Sciatic nerve (tissue), 2 donors: ENCODE measurements at regions of chr10 and their contacts with region 1.

Region 1: GRCh38 chr10:105188737-105189462 is 547.8 kb downstream of the SORCS3 start:
- DNase-seq: no peak
- ATAC-seq: no peak

Region 2: GRCh38 chr10:105138358-105138757 is 50.5 kb before region 1 on chr10:
- intact Hi-C with region 1: no loop called
- DNase-seq: no peak
- ATAC-seq: no peak

Region 3: DNA sequence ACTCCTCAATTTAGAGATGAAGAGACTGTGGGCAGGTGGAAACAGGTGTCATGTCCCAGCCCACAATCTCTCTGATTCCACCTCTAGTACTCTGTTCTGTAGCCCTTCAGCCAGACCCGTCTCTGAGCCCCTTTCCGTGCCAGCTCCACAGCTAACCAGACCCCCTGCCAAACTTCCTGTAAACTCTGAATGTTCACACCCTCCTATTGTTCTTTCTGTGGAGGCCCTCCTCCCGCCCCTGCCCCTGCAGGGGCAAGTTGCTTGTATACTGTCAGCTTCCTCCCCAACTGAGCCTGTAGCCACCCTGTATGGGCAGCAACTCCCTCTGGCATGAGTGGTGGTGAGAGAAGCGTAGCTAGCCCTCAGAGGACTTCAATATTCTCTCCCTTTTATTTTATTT is 27.1 kb before region 1 on chr10:
- intact Hi-C with region 1: no loop called
- DNase-seq: no peak
- ATAC-seq: no peak

Region 4: GRCh38 chr10:105605918-105606317 is 417.0 kb after region 1 on chr10:
- intact Hi-C with region 1: loop called (anchors 5 kb)
- DNase-seq: no peak
- ATAC-seq: no peak